WTC11 (cell line): ENCODE measurements at regions of chr1 and their contacts with region 1.

Region 1: GRCh38 chr1:205977402-205978014 is 25.7 kb downstream of the RAB7B start:
- DNase-seq: peak; percentile 82
- ATAC-seq: peak; percentile 86
- H3K4me3 Mint-ChIP-seq: no peak overlapping the region
- H3K27ac Mint-ChIP-seq: no peak overlapping the region
- H3K4me1 Mint-ChIP-seq: peaks cover 5% of the 10 kb centered on the region; the same call in 1 of the 2 replicates
- H3K27me3 Mint-ChIP-seq: peaks cover 3% of the 10 kb centered on the region; the same call in 1 of the 2 replicates
- CTCF ChIP-seq: peak; percentile 93

Region 2: GRCh38 chr1:205749234-205750137 is 228.0 kb before region 1 on chr1:
- CTCF ChIA-PET with region 1: interaction called, 10 read pairs
- POLR2A ChIA-PET with region 1: no interaction called
- DNase-seq: peak; percentile 97
- ATAC-seq: peak; percentile 88
- H3K4me3 Mint-ChIP-seq: peak overlapping the region; percentile 97
- H3K27ac Mint-ChIP-seq: peak overlapping the region; percentile 99
- H3K4me1 Mint-ChIP-seq: peaks cover 47% of the 10 kb centered on the region
- H3K27me3 Mint-ChIP-seq: no peaks in the 10 kb centered on the region; the same call in 1 of the 2 replicates
- CTCF ChIP-seq: no peak

Region 3: DNA sequence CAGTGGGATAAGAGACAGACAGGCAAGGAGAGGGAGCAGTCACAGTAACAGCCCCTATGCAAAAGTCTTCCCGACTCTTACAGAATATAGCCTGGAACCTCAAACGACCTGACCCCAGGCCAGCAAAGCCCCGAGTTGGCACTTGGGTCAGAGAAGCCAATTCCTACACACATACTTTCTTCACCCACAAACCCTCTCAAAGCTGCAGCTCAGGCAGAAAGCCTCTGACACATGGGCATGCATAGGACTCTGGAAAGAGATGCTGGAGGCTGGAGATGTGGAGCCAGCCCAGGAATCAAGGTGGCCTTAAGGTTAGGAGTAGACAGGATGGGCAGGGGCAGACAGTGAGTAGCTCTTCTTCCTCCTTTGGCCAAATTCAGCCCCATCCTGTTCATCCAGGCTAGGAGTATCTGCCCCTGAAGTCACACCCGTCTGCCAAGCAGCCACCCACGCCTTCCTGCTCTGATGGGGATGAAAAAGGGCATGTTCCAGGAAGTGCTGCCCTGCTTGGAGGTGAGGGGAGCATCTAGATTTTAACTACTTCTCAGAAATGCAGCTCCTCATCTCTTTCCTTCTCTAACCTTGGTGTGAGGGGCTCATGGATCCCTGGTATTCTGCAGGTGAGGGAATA is 172.3 kb before region 1 on chr1:
- CTCF ChIA-PET with region 1: interaction called, 27 read pairs
- POLR2A ChIA-PET with region 1: no interaction called
- DNase-seq: no peak
- ATAC-seq: no peak
- H3K4me3 Mint-ChIP-seq: no peak overlapping the region
- H3K27ac Mint-ChIP-seq: no peak overlapping the region
- H3K4me1 Mint-ChIP-seq: peaks cover 4% of the 10 kb centered on the region; the same call in 1 of the 2 replicates
- H3K27me3 Mint-ChIP-seq: no peaks in the 10 kb centered on the region
- CTCF ChIP-seq: no peak

Region 4: GRCh38 chr1:205907794-205908193 is 69.7 kb before region 1 on chr1:
- CTCF ChIA-PET with region 1: interaction called, 557 read pairs
- POLR2A ChIA-PET with region 1: no interaction called
- DNase-seq: peak; percentile 57
- ATAC-seq: peak; percentile 92
- H3K4me3 Mint-ChIP-seq: no peak overlapping the region
- H3K27ac Mint-ChIP-seq: no peak overlapping the region
- H3K4me1 Mint-ChIP-seq: peaks cover 3% of the 10 kb centered on the region
- H3K27me3 Mint-ChIP-seq: no peaks in the 10 kb centered on the region; the same call in none of the 2 replicates
- CTCF ChIP-seq: peak; percentile 28; the same call in 1 of the 2 replicates

Region 5: DNA sequence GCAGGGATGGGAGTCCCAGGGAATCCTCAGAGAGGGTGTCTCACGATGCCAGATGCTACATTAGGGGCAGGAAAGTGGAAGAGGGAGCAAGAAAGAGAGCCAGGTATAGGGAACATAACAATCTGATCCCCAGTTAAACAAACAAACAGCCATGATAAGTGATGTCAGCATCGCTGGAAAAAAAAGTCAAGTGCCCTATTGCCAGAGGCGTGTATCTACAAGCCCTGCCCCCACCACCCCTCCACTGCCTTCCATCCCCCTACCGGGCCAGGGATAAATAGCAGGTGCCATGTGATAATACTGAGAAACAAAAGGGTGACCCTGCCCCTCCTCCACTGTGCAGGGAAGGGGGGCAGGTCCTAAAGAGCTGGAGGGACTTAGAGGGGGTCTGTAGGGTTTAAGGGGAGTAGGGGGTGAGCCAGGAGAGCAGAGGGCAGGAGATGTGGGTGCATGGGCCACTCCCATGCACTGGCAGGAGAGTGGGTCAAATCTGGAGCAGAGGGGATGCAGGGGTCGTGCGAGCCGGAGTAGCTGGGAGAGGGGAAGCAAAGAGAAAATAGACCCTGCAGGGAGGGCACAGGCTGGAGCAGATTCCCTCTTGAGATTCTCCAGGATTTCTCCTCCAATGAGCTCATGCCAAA is 37.7 kb before region 1 on chr1:
- CTCF ChIA-PET with region 1: interaction called, 61 read pairs
- POLR2A ChIA-PET with region 1: no interaction called
- DNase-seq: peak; percentile 79
- ATAC-seq: peak; percentile 96
- H3K4me3 Mint-ChIP-seq: peak overlapping the region; percentile 25; the same call in 1 of the 2 replicates
- H3K27ac Mint-ChIP-seq: no peak overlapping the region
- H3K4me1 Mint-ChIP-seq: peaks cover 27% of the 10 kb centered on the region
- H3K27me3 Mint-ChIP-seq: peaks cover 4% of the 10 kb centered on the region
- CTCF ChIP-seq: peak; percentile 48; the same call in 1 of the 2 replicates

Region 6: GRCh38 chr1:206030714-206031113 is 53.2 kb after region 1 on chr1:
- CTCF ChIA-PET with region 1: interaction called, 14 read pairs
- POLR2A ChIA-PET with region 1: no interaction called
- DNase-seq: peak; percentile 76
- ATAC-seq: peak; percentile 99
- H3K4me3 Mint-ChIP-seq: no peak overlapping the region
- H3K27ac Mint-ChIP-seq: no peak overlapping the region
- H3K4me1 Mint-ChIP-seq: peaks cover 6% of the 10 kb centered on the region
- H3K27me3 Mint-ChIP-seq: no peaks in the 10 kb centered on the region
- CTCF ChIP-seq: peak; percentile 33; the same call in 1 of the 2 replicates